ENCODE measurements at regions of chr13 and their contacts with region 1.

Region 1: DNA sequence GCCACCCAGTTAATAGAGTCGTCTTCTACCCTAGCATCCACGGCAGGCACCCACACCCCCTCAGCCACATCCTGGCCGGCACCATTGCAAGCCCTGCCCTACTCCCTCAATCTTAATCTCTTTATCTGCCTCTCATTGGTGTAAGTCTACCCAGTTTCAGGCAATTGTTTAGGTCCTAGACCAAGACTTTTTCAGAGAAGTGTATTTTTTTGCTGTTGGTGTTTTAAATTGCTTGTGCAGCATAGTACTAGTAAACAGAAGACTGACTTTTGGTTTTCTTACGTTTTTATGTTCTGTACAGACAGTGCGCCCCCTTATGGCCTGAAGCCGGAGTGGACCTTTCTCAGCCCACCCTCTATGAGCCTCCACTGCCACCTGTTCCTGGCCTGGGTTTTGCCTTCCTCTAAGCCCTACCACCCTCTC is 2.3 kb upstream of the LCP1 start:
- DNase-seq: peak; percentile 70
- H3K4me3 Mint-ChIP-seq: peak overlapping the region; percentile 94
- H3K27ac Mint-ChIP-seq: peak overlapping the region; percentile 97
- H3K4me1 Mint-ChIP-seq: peaks cover 41% of the 10 kb centered on the region
- H3K27me3 Mint-ChIP-seq: no peaks in the 10 kb centered on the region

Region 2: DNA sequence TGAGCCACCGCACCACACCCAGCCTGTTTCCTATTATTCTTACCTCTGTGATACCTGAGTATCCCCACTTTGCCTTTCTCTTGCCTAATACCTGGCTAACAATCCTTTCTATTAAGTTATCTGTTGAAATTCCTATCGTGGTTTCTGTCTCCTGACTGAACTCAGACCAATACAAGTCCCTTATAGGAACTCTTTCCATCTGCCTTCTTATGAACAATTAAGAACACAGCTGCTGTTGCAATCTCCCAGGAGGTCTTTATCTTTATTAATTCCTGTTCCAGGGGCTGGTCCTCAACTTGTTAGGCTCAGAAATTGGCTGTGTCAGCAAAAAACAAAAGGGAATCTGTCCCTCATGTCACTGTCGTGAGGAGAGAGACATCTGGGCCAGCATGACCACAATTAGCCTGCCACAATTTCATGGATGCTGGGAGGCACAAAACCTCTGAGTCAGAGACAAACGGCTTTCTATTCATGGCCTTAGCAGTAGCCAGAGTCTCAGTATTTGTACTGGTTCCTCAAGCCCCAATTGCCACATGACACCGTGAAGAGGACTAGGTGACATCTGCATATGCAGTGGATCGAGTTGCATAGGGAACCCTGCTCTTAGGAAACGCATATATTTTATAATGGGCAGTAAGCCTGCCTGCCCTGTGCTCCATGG is 1253.2 kb before region 1 on chr13:
- intact Hi-C with region 1: no loop called
- DNase-seq: no peak
- H3K4me3 Mint-ChIP-seq: no peak overlapping the region
- H3K27ac Mint-ChIP-seq: no peak overlapping the region
- H3K4me1 Mint-ChIP-seq: peaks cover 13% of the 10 kb centered on the region
- H3K27me3 Mint-ChIP-seq: peaks cover 13% of the 10 kb centered on the region

Region 3: DNA sequence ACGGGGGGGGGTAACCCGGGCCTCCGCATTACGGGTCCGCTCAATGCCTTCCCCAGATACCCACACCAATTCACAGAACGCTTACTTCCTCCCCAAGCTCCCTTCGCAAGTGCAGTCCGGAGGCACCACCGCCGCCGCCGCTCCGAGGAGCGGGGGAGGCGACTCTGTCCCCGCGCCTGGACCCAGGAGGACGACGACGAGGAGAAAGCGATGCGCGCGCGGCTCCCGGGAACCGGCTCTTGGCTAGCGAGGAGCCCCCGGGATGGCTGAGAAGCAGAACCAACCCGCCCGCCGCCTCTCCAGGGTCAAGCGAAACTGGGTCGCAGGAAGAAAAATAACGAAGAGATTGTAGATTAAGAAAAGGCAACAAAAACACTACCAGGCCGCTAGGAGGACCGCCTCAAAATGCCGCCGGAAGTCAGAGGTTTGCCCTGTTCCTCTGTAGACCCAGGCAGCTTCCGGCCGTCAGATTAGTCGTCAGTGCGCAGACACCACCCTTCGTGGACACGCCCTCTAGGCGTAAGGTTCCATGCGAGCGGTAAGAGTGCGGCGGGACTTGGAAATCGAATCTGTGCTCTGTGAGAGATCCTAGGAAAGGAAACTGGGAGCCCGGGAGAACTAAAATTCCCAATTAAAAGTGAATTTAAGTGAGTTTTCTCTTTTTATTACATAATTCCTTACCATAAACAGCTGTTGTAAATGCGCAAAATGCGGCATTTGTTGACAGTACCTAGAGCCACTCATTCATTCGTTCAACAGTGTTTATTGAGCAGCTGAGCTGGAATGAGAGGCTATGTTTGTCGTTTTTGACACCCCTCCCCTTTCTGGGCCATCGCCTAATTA is 131.7 kb before region 1 on chr13 and contains the start of gene ZC3H13:
- intact Hi-C with region 1: loop called (anchors 5 kb)
- DNase-seq: peak; percentile 91
- H3K4me3 Mint-ChIP-seq: peak within 1 kb of the TSS; percentile 95
- H3K27ac Mint-ChIP-seq: peak within 1 kb of the TSS; percentile 98
- H3K4me1 Mint-ChIP-seq: peaks cover 24% of the 10 kb centered on the region
- H3K27me3 Mint-ChIP-seq: peaks cover 14% of the 10 kb centered on the region
- total RNA-seq, gene ZC3H13: 55.2 and 56.6 TPM in 2 replicates

Region 4: GRCh38 chr13:46160471-46161066 is 23.7 kb before region 1 on chr13:
- intact Hi-C with region 1: loop called (anchors 1 kb)
- DNase-seq: peak; percentile 45
- H3K4me3 Mint-ChIP-seq: peak overlapping the region; percentile 69
- H3K27ac Mint-ChIP-seq: peak overlapping the region; percentile 92
- H3K4me1 Mint-ChIP-seq: peaks cover 55% of the 10 kb centered on the region
- H3K27me3 Mint-ChIP-seq: no peaks in the 10 kb centered on the region

Region 5: DNA sequence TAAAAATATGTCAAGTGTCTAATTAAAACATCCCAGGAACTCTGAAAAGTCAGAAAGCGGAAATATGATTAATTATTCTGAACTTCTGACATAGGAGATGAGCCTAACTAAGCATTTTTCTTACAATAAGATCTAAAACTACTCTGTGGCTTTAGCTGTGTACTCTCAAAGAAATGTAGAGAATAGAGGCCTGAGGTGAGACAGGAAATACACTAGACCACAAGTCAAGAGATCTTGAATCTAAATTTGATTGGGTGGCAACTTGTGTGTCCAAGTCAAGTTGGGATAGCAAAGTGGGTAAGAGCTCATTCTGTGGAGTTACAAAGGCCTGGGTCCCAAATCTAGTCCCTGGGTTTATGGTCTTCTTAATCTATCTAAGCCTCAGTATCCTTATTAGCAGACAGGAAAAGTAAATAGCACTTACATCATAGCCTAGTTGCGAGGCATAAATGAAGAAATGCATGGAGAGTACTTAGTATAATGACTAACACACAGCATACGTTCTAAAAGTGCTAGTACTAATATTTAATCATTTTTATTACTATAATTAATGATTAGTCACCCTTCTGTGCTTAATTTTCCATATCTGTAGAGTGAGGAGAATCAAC is 18.0 kb after region 1 on chr13:
- intact Hi-C with region 1: loop called (anchors 1 kb)
- DNase-seq: no peak
- H3K4me3 Mint-ChIP-seq: no peak overlapping the region
- H3K27ac Mint-ChIP-seq: peak overlapping the region; percentile 53
- H3K4me1 Mint-ChIP-seq: peaks cover 50% of the 10 kb centered on the region
- H3K27me3 Mint-ChIP-seq: no peaks in the 10 kb centered on the region

Region 6: DNA sequence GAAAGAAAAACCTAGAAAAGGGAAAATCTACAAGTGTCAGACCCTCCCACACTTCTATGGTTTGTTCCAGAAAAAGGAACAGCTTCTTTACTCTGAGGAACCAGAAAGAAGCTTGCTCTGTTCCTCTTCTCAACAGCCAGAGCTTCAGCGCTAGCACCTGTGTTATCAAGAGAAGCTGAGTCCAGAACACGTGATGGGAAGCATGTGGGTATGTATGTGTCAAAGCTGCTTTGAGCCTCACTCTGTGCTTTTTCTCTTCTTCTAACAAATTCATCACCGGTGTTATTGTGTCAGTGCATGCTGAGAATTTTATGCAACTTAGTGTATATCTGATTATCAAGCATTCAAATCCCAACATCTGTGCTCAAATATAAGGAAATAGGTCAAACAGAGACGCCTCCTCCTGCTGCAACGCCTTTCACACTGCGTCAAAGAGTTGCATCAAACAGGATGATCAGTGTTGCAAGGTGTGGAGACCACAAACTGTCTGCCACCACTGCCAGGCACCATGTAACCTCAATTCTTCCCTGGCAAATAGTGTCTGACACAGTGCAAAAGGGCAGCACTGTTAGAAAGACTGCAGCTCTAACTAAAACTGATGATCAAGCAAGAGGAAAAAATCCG is 111.3 kb after region 1 on chr13:
- intact Hi-C with region 1: loop called (anchors 10 kb)
- DNase-seq: peak; percentile 49
- H3K4me3 Mint-ChIP-seq: peak overlapping the region; percentile 34
- H3K27ac Mint-ChIP-seq: peak overlapping the region; percentile 86
- H3K4me1 Mint-ChIP-seq: peaks cover 45% of the 10 kb centered on the region
- H3K27me3 Mint-ChIP-seq: no peaks in the 10 kb centered on the region